Ovary (tissue), 10 donors: ENCODE measurements at regions of chr17 and their contacts with region 1.

Region 1: DNA sequence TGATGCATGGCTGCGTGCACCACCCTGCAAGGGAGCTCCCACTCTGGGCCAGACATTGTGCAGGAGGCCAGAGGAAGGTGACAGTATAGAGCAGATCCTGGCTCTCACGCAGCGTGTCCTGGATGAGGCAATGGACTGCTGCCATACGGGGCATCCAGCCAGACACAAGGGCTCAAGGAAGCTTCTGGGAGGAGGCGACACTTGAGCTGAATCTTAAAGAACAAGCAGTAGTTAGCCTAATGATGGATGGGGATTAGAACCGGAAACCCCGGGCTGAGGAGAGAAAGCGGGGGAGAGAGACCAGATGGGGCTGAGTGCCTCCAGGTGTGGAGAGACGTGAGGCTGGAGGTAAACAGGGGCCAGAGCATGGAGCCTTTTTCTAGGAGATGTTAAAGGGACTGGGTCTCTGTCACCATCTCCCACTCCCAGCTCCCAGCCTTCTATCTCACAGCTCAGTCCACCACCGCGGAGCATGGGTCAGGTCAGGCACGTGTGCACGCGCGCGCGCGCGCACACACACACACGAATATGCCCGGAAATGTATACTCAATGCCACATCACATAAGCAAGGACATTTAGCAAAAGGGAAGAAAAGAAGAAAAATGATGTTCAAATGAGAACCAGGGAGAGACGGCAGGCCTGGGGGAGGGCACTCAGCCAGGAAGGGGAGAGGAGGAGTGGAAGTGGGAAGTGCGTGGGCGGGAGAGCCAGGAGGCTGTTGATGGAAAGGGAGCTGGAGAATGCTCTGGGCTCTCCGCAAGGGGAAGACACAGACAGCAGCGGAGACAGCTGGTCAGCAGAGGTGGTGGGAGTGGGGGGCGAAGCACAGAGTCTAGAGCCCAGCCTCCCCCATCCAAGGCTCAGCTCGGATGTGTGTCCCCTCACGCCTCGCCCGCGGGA is 46.2 kb downstream of the CCDC42 start:
- DNase-seq: peak; percentile 82 to 89 (median 84)
- H3K4me3 ChIP-seq: no peak overlapping the region
- H3K27ac ChIP-seq: peak overlapping the region in 1 of 2 donors; percentile 4
- H3K4me1 ChIP-seq: peaks cover 19% of the 10 kb centered on the region
- H3K27me3 ChIP-seq: no peaks in the 10 kb centered on the region
- CTCF ChIP-seq: no peak
- EP300 ChIP-seq: no peak
- POLR2A ChIP-seq: no peak

Region 2: GRCh38 chr17:8630802-8631553 is 67.4 kb before region 1 on chr17:
- intact Hi-C with region 1: loop called in 1 of 4 experiments (anchors 5 kb)
- DNase-seq: peak; percentile 98 to 99 (median 99)
- H3K4me3 ChIP-seq: peak overlapping the region; percentile 84
- H3K27ac ChIP-seq: peak overlapping the region; percentile 38 to 76
- H3K4me1 ChIP-seq: peaks cover 3% of the 10 kb centered on the region
- H3K27me3 ChIP-seq: no peaks in the 10 kb centered on the region
- CTCF ChIP-seq: peak in 2 of 3 donors; percentile 47
- EP300 ChIP-seq: no peak
- POLR2A ChIP-seq: no peak